Gastrocnemius medialis (tissue), 4 donors: ENCODE measurements at regions of chr3 and their contacts with region 1.

Region 1: GRCh38 chr3:187745201-187746058 is at the start of gene BCL6:
- DNase-seq: peak; percentile 93 to 94
- ATAC-seq: peak; percentile 48 to 51
- H3K4me3 ChIP-seq: peak within 1 kb of the TSS; percentile 70 to 94 (median 88)
- H3K27ac ChIP-seq: peak within 1 kb of the TSS; percentile 95 to 100 (median 98)
- H3K4me1 ChIP-seq: peaks cover 22% of the 10 kb centered on the region in 2 donors
- H3K27me3 ChIP-seq: no peaks in the 10 kb centered on the region
- CTCF ChIP-seq: peak in 3 of 5 experiments; percentile 16 to 35 (median 23)
- POLR2A ChIP-seq: peak; percentile 95 to 99
- total RNA-seq, gene BCL6: 223 to 363 (median 292) TPM

Region 2: GRCh38 chr3:187919048-187919447 is 173.6 kb after region 1 on chr3:
- in situ Hi-C with region 1: loop called in 1 of 4 experiments (anchors 5 kb)
- intact Hi-C with region 1: loop called (anchors 2 kb)
- DNase-seq: no peak
- ATAC-seq: no peak
- H3K4me3 ChIP-seq: no peak overlapping the region
- H3K27ac ChIP-seq: peak overlapping the region in 3 of 4 donors; percentile 35 to 80 (median 79)
- H3K4me1 ChIP-seq: peaks cover 33 to 38% of the 10 kb centered on the region in 2 donors
- H3K27me3 ChIP-seq: no peaks in the 10 kb centered on the region
- CTCF ChIP-seq: no peak
- POLR2A ChIP-seq: no peak

Region 3: DNA sequence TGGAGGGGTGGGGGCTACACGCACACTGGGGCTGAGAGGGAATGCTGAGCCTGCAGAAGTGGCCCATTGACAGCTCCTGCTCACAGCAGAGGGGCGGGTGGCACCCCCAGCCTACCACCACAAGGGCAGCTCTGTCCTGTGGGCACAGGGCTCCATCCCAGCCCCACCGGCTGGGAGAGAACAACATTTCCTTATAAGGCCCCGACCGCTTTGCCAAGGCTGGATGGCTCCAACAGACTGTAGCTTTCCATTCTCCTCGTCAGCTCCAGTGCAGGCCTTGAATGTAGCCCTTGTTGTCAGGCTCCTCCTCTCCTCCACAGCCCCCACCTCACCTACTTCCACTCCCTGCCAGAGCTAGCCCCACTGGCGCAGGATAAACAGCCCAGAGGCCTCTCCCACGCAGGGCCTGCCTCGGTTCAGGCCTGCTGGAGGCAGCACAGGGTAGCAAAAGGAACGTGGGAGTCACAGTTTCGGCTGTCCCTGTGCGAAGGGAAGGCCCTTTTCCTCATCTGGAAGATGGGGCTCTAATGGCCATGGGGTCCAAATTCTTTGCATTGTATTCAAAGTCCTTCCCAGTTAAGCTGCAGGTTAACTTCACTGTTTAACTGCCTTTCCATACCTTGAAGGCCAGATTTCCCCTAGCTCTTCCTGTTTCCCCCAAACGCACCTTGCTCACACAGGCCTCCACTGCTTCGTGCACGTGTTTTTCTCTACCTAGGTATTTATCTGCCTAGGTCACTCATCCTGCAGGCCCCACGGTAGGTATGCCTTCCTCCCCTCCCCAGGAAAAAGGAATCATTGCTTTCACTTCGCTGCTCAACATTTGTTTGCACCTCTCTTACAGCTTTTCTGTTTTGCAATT is 307.0 kb after region 1 on chr3:
- in situ Hi-C with region 1: no loop called
- intact Hi-C with region 1: loop called (anchors 5 kb)
- DNase-seq: peak; percentile 72 to 94
- ATAC-seq: peak; percentile 80 to 89
- H3K4me3 ChIP-seq: no peak overlapping the region
- H3K27ac ChIP-seq: peak overlapping the region; percentile 71 to 87 (median 74)
- H3K4me1 ChIP-seq: peaks cover 26% of the 10 kb centered on the region in 2 donors
- H3K27me3 ChIP-seq: no peaks in the 10 kb centered on the region
- CTCF ChIP-seq: peak in 4 of 5 experiments; percentile 32 to 56 (median 47)
- POLR2A ChIP-seq: peak in 1 of 2 donors; percentile 23

Region 4: DNA sequence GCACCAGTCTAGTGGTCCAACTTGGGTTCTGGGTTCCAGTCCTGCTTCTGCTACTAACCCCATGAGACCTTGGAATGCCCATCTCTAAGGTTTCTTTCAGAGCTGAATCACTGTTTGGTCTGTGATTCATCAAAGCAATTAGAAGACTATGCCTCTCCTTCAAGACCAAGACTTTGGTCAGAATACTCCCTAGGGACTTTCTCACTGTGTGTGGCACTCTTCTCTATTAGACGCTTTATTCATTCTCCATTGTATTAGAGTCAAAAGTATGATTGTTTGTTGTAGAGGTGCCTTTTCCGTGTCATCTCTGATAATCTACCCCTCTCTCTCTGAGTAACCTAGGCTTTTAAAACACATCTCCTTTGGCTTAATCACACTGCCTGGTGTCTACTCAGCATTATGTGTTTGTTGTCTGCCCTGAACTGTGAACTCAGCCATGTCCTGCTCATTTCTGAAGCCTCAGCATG is 499.0 kb after region 1 on chr3:
- in situ Hi-C with region 1: loop called in 1 of 4 experiments (anchors 25 kb)
- intact Hi-C with region 1: no loop called
- DNase-seq: no peak
- ATAC-seq: no peak
- H3K4me3 ChIP-seq: no peak overlapping the region
- H3K27ac ChIP-seq: peak overlapping the region; percentile 84 to 89 (median 86)
- H3K4me1 ChIP-seq: peaks cover 49 to 50% of the 10 kb centered on the region in 2 donors
- H3K27me3 ChIP-seq: no peaks in the 10 kb centered on the region
- CTCF ChIP-seq: no peak
- POLR2A ChIP-seq: no peak

Region 5: GRCh38 chr3:188421836-188422540 is 676.6 kb after region 1 on chr3:
- in situ Hi-C with region 1: loop called in 2 of 4 experiments (anchors 25 kb)
- intact Hi-C with region 1: loop called (anchors 5 kb)
- DNase-seq: no peak
- ATAC-seq: no peak
- H3K4me3 ChIP-seq: no peak overlapping the region
- H3K27ac ChIP-seq: peak overlapping the region; percentile 31 to 50 (median 47)
- H3K4me1 ChIP-seq: peaks cover 21% of the 10 kb centered on the region in 2 donors
- H3K27me3 ChIP-seq: no peaks in the 10 kb centered on the region
- CTCF ChIP-seq: no peak
- POLR2A ChIP-seq: no peak

Region 6: GRCh38 chr3:188683032-188683521 is 937.6 kb after region 1 on chr3:
- in situ Hi-C with region 1: loop called in 1 of 4 experiments (anchors 25 kb)
- intact Hi-C with region 1: no loop called
- DNase-seq: peak; percentile 61 to 73
- ATAC-seq: peak; percentile 99 to 100
- H3K4me3 ChIP-seq: no peak overlapping the region
- H3K27ac ChIP-seq: peak overlapping the region; percentile 73 to 90 (median 78)
- H3K4me1 ChIP-seq: peaks cover 40 to 44% of the 10 kb centered on the region in 2 donors
- H3K27me3 ChIP-seq: no peaks in the 10 kb centered on the region
- CTCF ChIP-seq: no peak
- POLR2A ChIP-seq: peak; percentile 32 to 73

Region 7: GRCh38 chr3:189148081-189148507 is 1402.7 kb after region 1 on chr3:
- in situ Hi-C with region 1: loop called in 1 of 4 experiments (anchors 10 kb)
- intact Hi-C with region 1: no loop called
- DNase-seq: peak; percentile 25 to 49
- ATAC-seq: peak; percentile 64 to 76
- H3K4me3 ChIP-seq: no peak overlapping the region
- H3K27ac ChIP-seq: no peak overlapping the region
- H3K4me1 ChIP-seq: peaks cover 7 to 12% of the 10 kb centered on the region in 2 donors
- H3K27me3 ChIP-seq: no peaks in the 10 kb centered on the region
- CTCF ChIP-seq: peak; percentile 56 to 84 (median 80)
- POLR2A ChIP-seq: no peak